Mammary epithelial cell (primary cell): ENCODE measurements at regions of chr21 and their contacts with region 1.

Region 1: DNA sequence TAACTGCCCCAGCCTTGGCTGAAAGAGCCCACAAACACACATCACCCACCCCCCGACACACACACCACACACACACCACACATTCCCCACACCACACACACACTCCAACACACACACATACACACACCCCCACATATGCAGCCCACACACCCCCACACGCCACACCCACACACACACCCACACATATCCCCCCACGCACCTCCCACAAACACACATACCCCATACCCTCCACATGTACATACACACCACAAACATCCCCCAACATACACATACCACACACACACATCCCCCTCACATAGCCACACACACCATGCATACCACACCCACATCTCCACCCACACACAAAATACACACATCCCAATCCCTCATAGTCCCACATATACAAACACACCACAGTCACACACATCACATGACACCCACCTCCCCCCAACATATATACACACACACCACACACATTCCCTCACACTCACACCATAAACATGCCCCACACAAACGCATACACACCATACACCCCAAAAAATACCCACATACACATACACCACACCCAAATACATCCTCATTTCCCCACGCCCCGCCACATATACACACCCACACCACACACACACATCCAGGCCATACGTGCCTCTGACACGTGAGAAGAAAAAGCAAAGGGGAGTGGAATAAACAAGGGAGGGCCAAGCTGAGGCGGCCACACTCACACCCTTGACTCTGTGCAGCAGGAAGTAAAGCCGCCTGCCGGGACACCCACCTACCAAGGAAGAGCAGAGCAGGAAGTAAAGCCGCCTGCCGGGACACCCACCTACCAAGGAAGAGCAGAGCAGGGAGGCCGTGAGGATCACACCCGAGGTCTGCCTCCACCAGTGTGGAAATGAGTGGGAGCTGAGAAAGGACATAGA is 53.7 kb downstream of the HSF2BP start:
- DNase-seq: no peak
- H3K4me3 ChIP-seq: no peak overlapping the region
- H3K27ac ChIP-seq: no peak overlapping the region
- H3K4me1 ChIP-seq: peaks cover 70% of the 10 kb centered on the region
- H3K27me3 ChIP-seq: no peaks in the 10 kb centered on the region
- CTCF ChIP-seq: no peak

Region 2: DNA sequence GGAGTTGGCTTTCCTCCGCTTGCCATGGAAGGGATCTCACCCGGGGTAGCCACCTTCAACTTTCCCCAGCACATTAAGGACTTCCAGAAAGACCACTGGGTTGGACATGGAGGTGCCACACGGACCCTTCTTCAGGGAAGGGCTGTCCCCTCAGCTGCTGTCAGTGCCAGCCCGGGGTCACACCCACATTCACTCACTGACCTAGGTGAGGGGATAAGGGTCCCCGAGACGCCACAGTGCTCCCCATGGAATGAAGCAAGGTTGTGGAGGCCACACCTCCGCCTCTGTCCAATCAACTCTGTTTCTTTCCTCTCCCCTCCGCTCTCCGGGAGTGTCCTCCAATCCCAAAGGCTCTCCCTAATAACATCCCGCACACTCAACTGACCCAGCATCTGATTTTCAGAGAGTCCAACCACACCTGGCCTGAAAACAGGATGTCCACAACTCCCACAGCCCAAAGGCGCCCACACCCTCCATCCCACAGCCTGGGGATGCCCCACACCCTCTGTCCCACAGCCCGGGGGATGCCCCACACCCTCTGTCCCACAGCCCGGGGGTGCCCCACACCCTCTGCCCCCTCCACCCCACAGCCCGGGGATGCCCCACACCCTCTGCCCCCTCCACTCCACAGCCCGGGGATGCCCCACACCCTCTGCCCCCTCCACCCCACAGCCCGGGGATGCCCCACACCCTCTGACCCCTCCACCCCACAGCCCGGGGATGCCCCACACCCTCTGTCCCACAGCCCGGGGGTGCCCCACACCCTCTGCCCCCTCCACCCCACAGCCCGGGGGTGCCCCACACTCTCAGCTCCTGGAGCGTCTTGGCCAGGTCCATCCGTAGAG is 1128.9 kb before region 1 on chr21:
- CTCF ChIA-PET with region 1: no interaction called
- dilution Hi-C with region 1: no loop called
- in situ Hi-C with region 1: no loop called
- intact Hi-C with region 1: no loop called
- DNase-seq: no peak
- H3K4me3 ChIP-seq: no peak overlapping the region
- H3K27ac ChIP-seq: no peak overlapping the region
- H3K4me1 ChIP-seq: peaks cover 14% of the 10 kb centered on the region
- H3K27me3 ChIP-seq: no peaks in the 10 kb centered on the region
- CTCF ChIP-seq: no peak

Region 3: DNA sequence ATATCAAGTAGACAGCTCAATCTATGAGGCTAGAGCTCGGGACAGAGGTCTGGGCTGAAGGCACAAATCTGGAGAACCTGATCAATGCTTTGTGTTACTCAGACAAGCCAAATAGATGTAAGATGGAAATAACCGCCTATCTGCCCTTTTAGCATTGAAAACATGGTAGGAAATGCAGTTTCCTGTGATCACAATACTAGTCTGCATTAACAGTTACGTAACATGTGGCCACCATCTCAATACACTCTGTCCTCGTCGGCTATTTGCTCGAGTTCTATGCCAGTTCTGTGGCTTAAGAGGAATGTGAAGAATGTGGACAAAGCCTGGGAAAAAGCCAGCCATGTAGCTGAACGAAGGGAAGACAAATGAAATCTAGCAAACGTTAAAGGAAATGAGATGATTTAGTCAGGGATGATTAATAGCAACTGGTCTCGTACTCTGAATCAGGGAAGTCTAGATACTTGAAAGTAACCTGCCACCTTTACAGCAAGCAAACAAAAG is 19.6 kb before region 1 on chr21:
- CTCF ChIA-PET with region 1: no interaction called
- dilution Hi-C with region 1: no loop called
- in situ Hi-C with region 1: no loop called
- intact Hi-C with region 1: loop called (anchors 1 kb)
- DNase-seq: peak; percentile 100
- H3K4me3 ChIP-seq: no peak overlapping the region
- H3K27ac ChIP-seq: peak overlapping the region; percentile 100
- H3K4me1 ChIP-seq: peaks cover 51% of the 10 kb centered on the region
- H3K27me3 ChIP-seq: no peaks in the 10 kb centered on the region
- CTCF ChIP-seq: no peak

Region 4: DNA sequence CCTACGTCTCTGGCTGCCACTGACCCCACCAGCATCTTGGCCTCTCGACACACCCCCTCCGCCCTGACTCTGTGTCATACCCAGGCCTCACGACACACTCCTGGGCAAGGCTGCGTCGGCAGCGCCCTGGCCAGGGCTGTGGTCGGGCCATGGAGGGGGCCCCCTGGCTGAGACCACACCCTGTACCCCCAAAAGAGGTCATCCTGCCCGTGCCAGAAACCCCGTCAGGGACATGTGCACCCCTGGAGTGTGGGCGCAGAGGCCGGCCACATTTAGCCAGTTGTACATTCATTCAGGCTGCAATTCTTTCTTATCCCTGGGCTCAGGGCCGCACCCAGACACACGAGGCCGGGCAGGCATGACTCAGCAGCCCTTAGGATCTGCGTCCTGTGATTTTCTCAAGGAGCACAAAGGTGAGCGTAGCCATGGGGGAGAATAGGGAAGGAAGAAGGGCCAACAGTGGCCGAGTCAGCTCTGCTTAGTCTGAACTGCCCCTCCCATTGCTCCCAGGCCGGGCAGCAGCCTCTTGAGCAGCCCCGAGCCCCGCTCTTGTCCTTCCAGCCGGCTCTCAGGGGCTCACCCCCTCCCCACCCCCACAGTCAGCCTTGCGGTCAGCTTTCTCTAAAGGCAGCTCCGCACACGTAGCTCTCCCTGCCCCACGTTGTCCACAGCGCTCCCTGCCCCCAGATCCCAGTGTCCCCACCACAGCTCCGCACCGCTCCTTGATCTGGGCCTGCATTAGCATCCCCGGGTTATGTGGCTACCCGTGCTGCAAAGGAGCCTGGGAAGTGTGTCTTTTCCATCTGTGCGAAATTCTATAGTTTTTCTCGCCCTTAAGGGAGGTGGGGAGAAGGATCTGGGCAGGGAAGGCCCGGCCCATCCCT is 162.7 kb after region 1 on chr21:
- CTCF ChIA-PET with region 1: no interaction called
- dilution Hi-C with region 1: no loop called
- in situ Hi-C with region 1: no loop called
- intact Hi-C with region 1: no loop called
- DNase-seq: peak; percentile 87
- H3K4me3 ChIP-seq: no peak overlapping the region
- H3K27ac ChIP-seq: peak overlapping the region; percentile 58
- H3K4me1 ChIP-seq: peaks cover 33% of the 10 kb centered on the region
- H3K27me3 ChIP-seq: no peaks in the 10 kb centered on the region
- CTCF ChIP-seq: no peak